Activated CD4-positive, alpha-beta memory T cell treated with anti-CD3 and anti-CD28 coated beads, Interleukin-2, amount 10 ng/mL, durations not matched to agents 7 days and 5 days (primary cell): ENCODE measurements at regions of chr14 and their contacts with region 1.

Region 1: DNA sequence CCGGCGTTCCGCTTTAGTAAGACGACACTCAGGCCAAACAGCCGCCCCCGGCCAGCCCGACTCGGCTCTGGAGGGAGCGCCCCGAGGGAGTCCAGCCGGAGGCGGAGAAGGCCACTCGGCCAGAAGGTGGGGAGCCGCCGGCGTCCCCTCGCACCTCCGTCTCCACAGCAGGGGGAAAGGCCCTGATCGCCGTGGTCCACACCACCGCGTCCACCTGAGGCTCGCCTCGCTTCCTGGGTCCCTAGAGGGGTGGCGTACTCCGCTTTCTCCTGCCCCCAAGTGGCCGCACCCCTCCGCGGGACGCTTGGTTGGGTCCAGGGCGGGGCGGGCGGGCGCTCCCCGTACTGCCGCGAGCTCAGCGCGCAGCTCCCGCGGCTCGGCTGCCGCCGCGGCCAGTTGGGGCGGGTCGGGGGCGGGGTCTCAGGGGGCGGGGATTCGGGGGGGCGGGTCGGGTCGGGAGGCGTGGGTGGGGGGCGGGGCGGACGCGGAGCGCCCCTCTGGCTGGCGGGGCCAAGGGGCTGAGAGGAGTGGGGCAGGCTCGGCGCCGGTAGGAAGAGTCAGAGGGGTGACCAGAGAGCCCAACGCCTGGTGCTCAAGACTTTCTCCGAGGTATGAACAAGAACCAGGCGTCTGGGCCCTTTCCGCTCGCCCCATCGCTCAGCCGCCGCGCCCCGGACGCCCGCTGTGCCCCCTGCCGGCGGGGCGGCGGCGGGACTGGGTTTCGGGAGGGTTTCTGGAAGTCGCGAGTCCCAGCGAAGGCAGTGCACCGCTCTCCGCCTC is at the start of gene FRMD6:
- DNase-seq: peak; percentile 87
- H3K4me3 Mint-ChIP-seq: peak within 1 kb of the TSS; percentile 79
- H3K27ac Mint-ChIP-seq: peak within 1 kb of the TSS; percentile 52
- H3K4me1 Mint-ChIP-seq: peaks cover 30% of the 10 kb centered on the region
- H3K27me3 Mint-ChIP-seq: peaks cover 27% of the 10 kb centered on the region
- total RNA-seq, gene FRMD6: 3.3 TPM

Region 2: GRCh38 chr14:51283402-51284085 is 368.0 kb before region 1 on chr14:
- CTCF ChIA-PET with region 1: interaction called, 11 read pairs
- POLR2A ChIA-PET with region 1: no interaction called
- DNase-seq: no peak
- H3K4me3 Mint-ChIP-seq: no peak overlapping the region
- H3K27ac Mint-ChIP-seq: no peak overlapping the region
- H3K4me1 Mint-ChIP-seq: no peaks in the 10 kb centered on the region
- H3K27me3 Mint-ChIP-seq: no peaks in the 10 kb centered on the region

Region 3: DNA sequence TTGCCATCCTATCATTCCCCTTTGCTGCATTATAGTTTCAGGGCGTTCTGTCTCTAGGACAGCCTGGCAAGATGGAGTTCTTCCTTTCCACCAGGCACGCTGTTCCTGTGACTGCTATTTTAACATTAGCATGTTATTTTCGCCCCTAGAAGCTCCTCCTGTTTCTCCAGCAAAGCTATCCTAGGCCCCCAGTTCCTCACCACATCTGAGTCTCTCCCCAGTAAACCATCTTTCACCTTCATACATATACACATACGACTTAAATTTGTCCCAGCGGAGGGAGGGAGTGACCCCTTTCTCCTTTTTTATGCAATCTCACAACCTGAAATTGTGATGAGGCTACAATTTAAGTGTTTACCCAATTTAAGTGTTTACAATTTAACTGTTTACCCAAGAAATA is 66.5 kb before region 1 on chr14:
- CTCF ChIA-PET with region 1: no interaction called
- POLR2A ChIA-PET with region 1: no interaction called
- DNase-seq: no peak
- H3K4me3 Mint-ChIP-seq: no peak overlapping the region
- H3K27ac Mint-ChIP-seq: no peak overlapping the region
- H3K4me1 Mint-ChIP-seq: no peaks in the 10 kb centered on the region
- H3K27me3 Mint-ChIP-seq: peaks cover 38% of the 10 kb centered on the region

Region 4: DNA sequence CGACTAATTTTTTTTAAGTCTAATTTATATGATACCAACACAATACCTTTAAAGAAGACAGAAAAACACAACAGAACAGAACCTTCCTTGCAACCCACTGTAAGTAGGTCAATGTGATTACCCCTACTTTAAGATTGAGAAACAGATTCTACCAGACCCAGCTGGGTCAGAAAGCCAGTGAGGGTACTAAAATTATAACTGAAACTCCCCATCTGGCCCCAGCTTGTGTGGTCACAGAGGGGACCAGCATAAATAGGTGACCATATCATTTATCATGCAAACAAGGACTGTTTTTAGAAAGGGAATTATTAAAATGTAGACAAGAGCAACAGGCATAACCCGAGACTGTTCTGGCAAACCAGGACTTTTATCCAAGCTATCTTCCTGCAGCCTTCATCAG is 29.9 kb before region 1 on chr14:
- CTCF ChIA-PET with region 1: no interaction called
- POLR2A ChIA-PET with region 1: no interaction called
- DNase-seq: no peak
- H3K4me3 Mint-ChIP-seq: no peak overlapping the region
- H3K27ac Mint-ChIP-seq: no peak overlapping the region
- H3K4me1 Mint-ChIP-seq: no peaks in the 10 kb centered on the region
- H3K27me3 Mint-ChIP-seq: peaks cover 8% of the 10 kb centered on the region

Region 5: GRCh38 chr14:51663783-51664326 is 12.3 kb after region 1 on chr14:
- CTCF ChIA-PET with region 1: interaction called, 12 read pairs
- POLR2A ChIA-PET with region 1: no interaction called
- DNase-seq: no peak
- H3K4me3 Mint-ChIP-seq: no peak overlapping the region
- H3K27ac Mint-ChIP-seq: no peak overlapping the region
- H3K4me1 Mint-ChIP-seq: no peaks in the 10 kb centered on the region
- H3K27me3 Mint-ChIP-seq: peaks cover 12% of the 10 kb centered on the region

Region 6: DNA sequence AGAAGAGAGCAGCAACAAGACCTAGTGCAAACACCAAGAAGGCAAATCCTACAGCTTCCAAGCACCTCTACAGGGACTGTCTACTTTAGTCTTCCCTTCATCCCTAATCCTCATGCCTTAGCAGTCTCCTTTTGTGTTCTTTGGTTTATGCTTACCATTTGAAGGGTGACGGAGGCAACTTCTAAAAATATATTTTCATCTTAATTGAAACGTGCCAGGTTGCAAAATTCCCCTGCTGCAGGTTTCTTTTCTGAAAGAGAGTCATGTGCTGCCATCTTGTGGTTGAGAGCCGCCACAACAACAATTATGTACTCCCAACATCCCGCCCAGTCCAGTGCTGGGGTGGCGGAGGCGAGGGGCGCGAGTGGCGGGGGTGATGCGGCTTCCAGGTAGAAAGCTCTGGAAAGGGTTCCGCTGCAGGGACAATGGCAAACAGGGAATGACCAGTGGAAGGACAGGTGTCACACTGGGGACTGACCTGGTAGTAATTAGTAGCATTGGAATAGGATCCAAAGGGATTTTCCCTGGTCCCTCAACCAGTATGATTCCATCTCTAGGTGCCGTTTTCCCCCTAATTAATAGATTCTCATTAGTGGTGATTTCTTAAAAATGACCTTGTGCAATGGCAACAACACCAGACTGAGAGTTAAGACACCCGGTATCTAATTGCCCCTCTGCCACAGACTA is 128.6 kb after region 1 on chr14:
- CTCF ChIA-PET with region 1: interaction called, 10 read pairs
- POLR2A ChIA-PET with region 1: interaction called, 3 read pairs
- DNase-seq: peak; percentile 74
- H3K4me3 Mint-ChIP-seq: no peak overlapping the region
- H3K27ac Mint-ChIP-seq: no peak overlapping the region
- H3K4me1 Mint-ChIP-seq: peaks cover 15% of the 10 kb centered on the region
- H3K27me3 Mint-ChIP-seq: peaks cover 37% of the 10 kb centered on the region